ENCODE measurements at regions of chr6 and their contacts with region 1.

Region 1: GRCh38 chr6:159042003-159042825 is 2.6 kb downstream of the TAGAP start:
- DNase-seq: peak; percentile 77
- H3K4me3 ChIP-seq: no peak overlapping the region
- H3K27ac ChIP-seq: peak overlapping the region in 1 of 2 donors; percentile 5
- H3K4me1 ChIP-seq: peaks cover 5% of the 10 kb centered on the region
- H3K27me3 ChIP-seq: no peaks in the 10 kb centered on the region
- CTCF ChIP-seq: peak; percentile 73 to 92 (median 81)
- POLR2A ChIP-seq: no peak

Region 2: DNA sequence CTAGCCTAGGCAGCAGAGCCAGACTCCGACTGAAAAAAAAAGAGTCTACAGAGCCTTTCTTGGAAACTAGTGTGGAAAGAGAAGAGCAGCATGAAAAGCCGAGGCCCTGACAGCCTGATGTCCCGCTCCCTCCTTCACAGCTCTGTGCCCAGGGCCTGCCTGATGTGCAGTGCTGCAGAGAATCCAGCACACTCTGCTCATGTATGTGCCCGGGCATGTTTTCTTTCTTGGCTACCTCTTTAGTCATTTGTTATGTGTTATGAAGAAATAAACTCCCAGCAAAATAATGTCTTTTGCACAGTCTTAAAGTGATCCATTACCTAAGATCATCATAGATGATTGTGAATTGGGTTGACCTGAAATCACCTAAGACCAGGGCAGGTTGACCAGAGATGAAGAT is 145.0 kb before region 1 on chr6:
- intact Hi-C with region 1: no loop called
- DNase-seq: no peak
- H3K4me3 ChIP-seq: no peak overlapping the region
- H3K27ac ChIP-seq: no peak overlapping the region
- H3K4me1 ChIP-seq: no peaks in the 10 kb centered on the region
- H3K27me3 ChIP-seq: no peaks in the 10 kb centered on the region
- CTCF ChIP-seq: no peak
- POLR2A ChIP-seq: no peak

Region 3: DNA sequence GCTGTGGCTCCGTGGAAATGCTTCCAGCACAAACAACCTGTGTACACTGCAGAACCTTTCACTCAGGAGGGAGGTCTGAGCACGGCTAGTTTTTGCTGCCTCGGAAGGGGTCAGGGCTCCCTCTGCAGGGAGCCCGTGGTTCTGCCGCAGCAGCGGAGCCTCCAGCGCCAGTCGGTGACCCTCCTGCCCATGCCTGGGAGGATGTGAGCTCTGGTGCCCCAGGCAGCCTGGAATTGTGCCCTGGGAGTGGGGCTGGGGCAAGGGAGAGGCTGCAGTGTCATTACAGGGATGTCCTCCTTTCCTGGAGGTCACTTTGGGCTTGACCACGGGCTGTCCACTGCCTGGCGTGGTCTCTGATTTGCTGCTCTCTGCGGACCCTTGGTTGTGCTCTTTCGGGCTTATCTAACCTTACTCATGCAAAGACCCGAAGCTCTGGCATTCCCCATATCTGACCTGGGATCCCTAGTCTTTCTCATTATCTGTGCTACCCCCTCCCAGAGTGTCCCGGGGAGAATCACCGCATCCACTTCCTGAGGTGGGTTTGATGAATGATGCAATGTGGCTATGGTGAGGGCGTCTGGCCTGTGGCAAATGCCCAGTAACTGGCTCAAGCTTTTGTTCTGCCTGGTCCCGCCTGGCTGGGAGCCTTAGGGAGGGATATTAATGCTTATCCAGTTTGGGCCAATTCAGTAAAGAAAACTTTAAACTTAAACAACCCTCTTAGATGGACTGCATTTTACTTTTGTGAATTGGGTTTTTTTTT is 62.1 kb after region 1 on chr6:
- intact Hi-C with region 1: loop called (anchors 10 kb)
- DNase-seq: peak; percentile 68
- H3K4me3 ChIP-seq: no peak overlapping the region
- H3K27ac ChIP-seq: no peak overlapping the region
- H3K4me1 ChIP-seq: peaks cover 15% of the 10 kb centered on the region
- H3K27me3 ChIP-seq: no peaks in the 10 kb centered on the region
- CTCF ChIP-seq: peak; percentile 37 to 84 (median 72)
- POLR2A ChIP-seq: no peak

Region 4: GRCh38 chr6:159134701-159135364 is 92.6 kb after region 1 on chr6:
- intact Hi-C with region 1: loop called (anchors 10 kb)
- DNase-seq: peak; percentile 90
- H3K4me3 ChIP-seq: no peak overlapping the region
- H3K27ac ChIP-seq: no peak overlapping the region
- H3K4me1 ChIP-seq: peaks cover 36% of the 10 kb centered on the region
- H3K27me3 ChIP-seq: no peaks in the 10 kb centered on the region
- CTCF ChIP-seq: peak; percentile 87 to 94 (median 89)
- POLR2A ChIP-seq: no peak